CD4-positive, alpha-beta T cell (primary cell): ENCODE measurements at regions of chr7 and their contacts with region 1.

Region 1: DNA sequence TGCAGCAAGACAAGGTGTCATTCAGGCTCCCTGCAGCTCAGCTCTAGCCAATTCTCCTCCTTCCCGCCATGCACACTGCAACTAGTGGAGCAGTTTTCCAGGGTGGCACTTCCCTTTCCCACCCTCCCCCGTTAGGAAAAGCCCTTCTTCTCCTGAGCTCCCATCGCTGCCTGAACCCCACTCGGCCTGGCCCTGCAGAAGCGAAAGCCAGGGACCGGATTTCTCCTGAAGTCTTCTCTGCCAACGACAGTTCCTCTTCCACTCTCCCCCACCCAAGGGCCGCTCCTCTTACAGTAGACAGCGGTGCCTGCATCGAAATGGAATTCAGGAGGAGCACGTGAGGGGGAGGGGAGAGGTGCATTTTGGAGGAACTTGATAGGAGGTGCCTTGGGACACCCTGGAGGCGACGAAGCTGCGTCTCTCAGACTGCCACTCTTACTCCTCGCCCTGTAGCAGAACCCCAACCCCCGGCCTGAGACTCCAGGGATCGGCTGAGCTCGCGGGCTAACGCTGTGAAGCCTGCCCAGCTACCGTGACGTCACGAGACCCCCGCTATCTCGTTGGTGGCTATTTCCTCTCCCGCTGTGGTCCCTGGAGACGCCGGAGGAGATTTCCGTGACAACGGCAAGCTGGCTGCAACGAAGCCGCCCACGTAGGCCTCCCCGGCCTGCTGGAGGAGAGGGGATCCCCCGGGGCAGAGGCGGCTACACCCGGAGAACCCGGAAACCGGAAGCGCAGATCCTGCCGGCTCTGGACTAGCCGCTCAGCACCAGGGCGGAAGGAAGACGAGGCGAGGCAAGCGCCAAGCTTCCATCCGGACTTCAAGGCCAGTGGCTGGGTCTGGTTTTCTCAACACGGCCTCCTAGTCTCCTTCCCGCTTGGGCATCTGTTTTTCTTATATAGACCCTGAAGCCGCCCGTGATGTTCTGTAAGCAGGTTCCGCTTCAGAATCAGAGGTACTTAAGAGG is 109.7 kb downstream of the RALA start:
- DNase-seq: peak; percentile 80 to 99 (median 92)
- ATAC-seq: peak; percentile 91
- H3K4me3 ChIP-seq: peak overlapping the region; percentile 73
- H3K4me3 Mint-ChIP-seq: peak overlapping the region; percentile 97
- H3K27ac ChIP-seq: peak overlapping the region; percentile 71 to 89
- H3K27ac Mint-ChIP-seq: peak overlapping the region; percentile 96
- H3K4me1 ChIP-seq: peaks cover 42% of the 10 kb centered on the region
- H3K4me1 Mint-ChIP-seq: peaks cover 41% of the 10 kb centered on the region
- H3K27me3 ChIP-seq: no peaks in the 10 kb centered on the region
- H3K27me3 Mint-ChIP-seq: no peaks in the 10 kb centered on the region
- CTCF ChIP-seq: no peak

Region 2: DNA sequence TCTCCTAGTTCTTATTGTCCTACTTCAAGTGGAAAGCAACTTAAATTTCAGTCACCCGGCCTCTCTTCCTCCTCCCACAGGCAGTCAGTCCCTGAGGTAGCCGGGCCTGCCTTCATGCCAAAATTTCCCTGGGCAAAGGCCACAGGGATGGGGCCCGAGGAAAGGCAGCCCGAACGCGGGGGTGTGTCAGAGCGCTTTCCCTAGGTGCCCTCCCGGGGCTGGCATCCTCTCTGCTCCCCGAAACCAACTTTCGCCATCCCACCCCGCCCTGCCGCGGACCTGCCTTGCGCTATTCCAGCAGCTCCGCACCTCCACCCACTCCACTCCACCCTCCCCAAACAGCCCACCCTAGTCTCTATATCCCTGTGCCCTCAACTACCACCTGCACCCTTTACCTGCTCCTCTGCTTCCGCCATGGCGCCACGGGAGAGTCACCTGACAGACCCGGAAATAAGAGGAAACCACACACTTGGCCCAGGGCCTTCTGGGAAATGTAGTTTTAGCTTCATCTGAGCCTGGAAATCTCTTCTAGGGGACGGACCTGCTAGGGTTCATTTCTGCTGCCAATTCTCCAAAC is 824.3 kb before region 1 on chr7 and contains the start of gene VPS41:
- CTCF ChIA-PET with region 1: no interaction called
- POLR2A ChIA-PET with region 1: no interaction called
- intact Hi-C with region 1: loop called in 1 of 2 experiments (anchors 5 kb)
- DNase-seq: peak; percentile 61 to 91 (median 72)
- ATAC-seq: peak; percentile 99
- H3K4me3 ChIP-seq: peak within 1 kb of the TSS; percentile 94
- H3K4me3 Mint-ChIP-seq: peak within 1 kb of the TSS; percentile 98
- H3K27ac ChIP-seq: no peak within 1 kb of the TSS
- H3K27ac Mint-ChIP-seq: peak within 1 kb of the TSS; percentile 84
- H3K4me1 ChIP-seq: peaks cover 7% of the 10 kb centered on the region
- H3K4me1 Mint-ChIP-seq: peaks cover 40% of the 10 kb centered on the region
- H3K27me3 ChIP-seq: no peaks in the 10 kb centered on the region
- H3K27me3 Mint-ChIP-seq: no peaks in the 10 kb centered on the region
- CTCF ChIP-seq: no peak
- total RNA-seq, gene VPS41: 19.4 to 22.9 TPM

Region 3: GRCh38 chr7:39433550-39433949 is 299.6 kb before region 1 on chr7:
- CTCF ChIA-PET with region 1: no interaction called
- POLR2A ChIA-PET with region 1: no interaction called
- intact Hi-C with region 1: no loop called
- DNase-seq: no peak
- ATAC-seq: no peak
- H3K4me3 ChIP-seq: no peak overlapping the region
- H3K4me3 Mint-ChIP-seq: no peak overlapping the region
- H3K27ac ChIP-seq: no peak overlapping the region
- H3K27ac Mint-ChIP-seq: no peak overlapping the region
- H3K4me1 ChIP-seq: no peaks in the 10 kb centered on the region
- H3K4me1 Mint-ChIP-seq: no peaks in the 10 kb centered on the region
- H3K27me3 ChIP-seq: no peaks in the 10 kb centered on the region
- H3K27me3 Mint-ChIP-seq: peaks cover 2% of the 10 kb centered on the region
- CTCF ChIP-seq: no peak

Region 4: GRCh38 chr7:39580149-39580874 is 152.8 kb before region 1 on chr7:
- CTCF ChIA-PET with region 1: interaction called, 8 read pairs
- POLR2A ChIA-PET with region 1: interaction called, 15 read pairs
- intact Hi-C with region 1: no loop called
- DNase-seq: peak; percentile 60 to 92 (median 70)
- ATAC-seq: peak; percentile 96
- H3K4me3 ChIP-seq: no peak overlapping the region
- H3K4me3 Mint-ChIP-seq: no peak overlapping the region
- H3K27ac ChIP-seq: no peak overlapping the region
- H3K27ac Mint-ChIP-seq: no peak overlapping the region
- H3K4me1 ChIP-seq: no peaks in the 10 kb centered on the region
- H3K4me1 Mint-ChIP-seq: peaks cover 9% of the 10 kb centered on the region
- H3K27me3 ChIP-seq: no peaks in the 10 kb centered on the region
- H3K27me3 Mint-ChIP-seq: no peaks in the 10 kb centered on the region
- CTCF ChIP-seq: peak; percentile 75

Region 5: DNA sequence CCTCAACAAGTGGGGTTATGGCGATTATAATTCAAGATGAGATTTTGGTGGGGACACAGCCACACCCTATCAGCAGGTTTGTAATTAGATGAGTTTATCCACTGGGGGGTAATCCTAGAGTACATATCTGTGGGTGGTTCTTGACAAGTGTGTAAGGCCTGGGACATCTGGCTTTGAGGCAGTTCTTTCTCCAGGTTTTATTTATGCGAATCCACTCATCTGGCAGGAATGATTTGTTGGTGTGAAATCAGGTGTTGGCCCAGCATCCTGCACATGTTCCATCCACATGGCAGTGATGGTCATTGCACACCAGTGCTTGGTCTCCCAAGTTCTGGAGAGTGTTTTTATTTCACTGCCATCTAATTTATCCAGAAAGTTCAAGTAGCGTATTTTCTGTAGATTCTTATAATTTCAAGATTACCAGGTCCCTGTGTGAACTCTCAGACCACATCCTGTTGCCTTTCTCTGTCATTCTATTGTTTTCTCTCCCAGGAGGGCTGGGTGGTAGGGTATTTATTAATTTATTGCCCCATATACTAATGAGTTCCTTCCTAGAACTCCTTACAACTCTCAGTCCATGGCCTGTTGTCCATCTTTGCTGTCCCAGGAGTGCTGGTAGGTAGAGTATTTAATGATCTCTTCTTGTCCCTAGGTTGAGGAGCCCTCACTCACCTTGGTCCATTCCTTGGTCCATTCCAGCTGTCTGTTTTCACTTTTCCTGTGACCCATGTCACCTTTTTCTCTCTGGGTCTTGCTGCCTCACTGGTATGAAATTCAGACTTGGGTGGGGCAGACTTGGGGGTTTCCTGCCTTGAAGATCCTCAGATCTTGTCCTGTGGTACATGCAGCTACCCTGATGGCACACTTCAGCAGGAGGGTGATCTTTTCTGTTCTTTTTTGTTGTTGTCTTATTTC is 99.3 kb before region 1 on chr7:
- CTCF ChIA-PET with region 1: interaction called, 3 read pairs
- POLR2A ChIA-PET with region 1: interaction called, 9 read pairs
- intact Hi-C with region 1: loop called in 1 of 2 experiments (anchors 5 kb)
- DNase-seq: peak in 12 of 14 experiments; percentile 17 to 77 (median 32)
- ATAC-seq: peak; percentile 88
- H3K4me3 ChIP-seq: peak overlapping the region; percentile 6
- H3K4me3 Mint-ChIP-seq: peak overlapping the region; percentile 74
- H3K27ac ChIP-seq: peak overlapping the region; percentile 71 to 80
- H3K27ac Mint-ChIP-seq: peak overlapping the region; percentile 96
- H3K4me1 ChIP-seq: peaks cover 35% of the 10 kb centered on the region
- H3K4me1 Mint-ChIP-seq: peaks cover 74% of the 10 kb centered on the region
- H3K27me3 ChIP-seq: no peaks in the 10 kb centered on the region
- H3K27me3 Mint-ChIP-seq: no peaks in the 10 kb centered on the region
- CTCF ChIP-seq: no peak

Region 6: GRCh38 chr7:40134428-40135316 is 401.6 kb after region 1 on chr7 and contains the starts of genes MPLKIP and SUGCT:
- CTCF ChIA-PET with region 1: interaction called, 7 read pairs
- POLR2A ChIA-PET with region 1: interaction called, 5 read pairs
- intact Hi-C with region 1: loop called in 1 of 2 experiments (anchors 5 kb)
- DNase-seq: peak; percentile 77 to 94 (median 84)
- ATAC-seq: peak; percentile 89
- H3K4me3 ChIP-seq: peak within 1 kb of the TSS; percentile 92
- H3K4me3 Mint-ChIP-seq: peak within 1 kb of the TSS; percentile 100
- H3K27ac ChIP-seq: peak within 1 kb of the TSS; percentile 86 to 89
- H3K27ac Mint-ChIP-seq: peak within 1 kb of the TSS; percentile 97
- H3K4me1 ChIP-seq: peaks cover 15% of the 10 kb centered on the region
- H3K4me1 Mint-ChIP-seq: peaks cover 43% of the 10 kb centered on the region
- H3K27me3 ChIP-seq: no peaks in the 10 kb centered on the region
- H3K27me3 Mint-ChIP-seq: peaks cover 3% of the 10 kb centered on the region
- CTCF ChIP-seq: peak; percentile 95
- total RNA-seq, gene MPLKIP: 14.3 to 14.9 TPM
- total RNA-seq, gene SUGCT: 0.95 to 1.2 TPM